ENCODE measurements at regions of chr16 and their contacts with region 1.

Region 1: GRCh38 chr16:89641458-89642119 is 15.9 kb downstream of the CHMP1A start:
- H3K4me3 ChIP-seq: no peak overlapping the region
- H3K27ac ChIP-seq: no peak overlapping the region
- H3K4me1 ChIP-seq: no peaks in the 10 kb centered on the region
- CTCF ChIP-seq: no peak

Region 2: DNA sequence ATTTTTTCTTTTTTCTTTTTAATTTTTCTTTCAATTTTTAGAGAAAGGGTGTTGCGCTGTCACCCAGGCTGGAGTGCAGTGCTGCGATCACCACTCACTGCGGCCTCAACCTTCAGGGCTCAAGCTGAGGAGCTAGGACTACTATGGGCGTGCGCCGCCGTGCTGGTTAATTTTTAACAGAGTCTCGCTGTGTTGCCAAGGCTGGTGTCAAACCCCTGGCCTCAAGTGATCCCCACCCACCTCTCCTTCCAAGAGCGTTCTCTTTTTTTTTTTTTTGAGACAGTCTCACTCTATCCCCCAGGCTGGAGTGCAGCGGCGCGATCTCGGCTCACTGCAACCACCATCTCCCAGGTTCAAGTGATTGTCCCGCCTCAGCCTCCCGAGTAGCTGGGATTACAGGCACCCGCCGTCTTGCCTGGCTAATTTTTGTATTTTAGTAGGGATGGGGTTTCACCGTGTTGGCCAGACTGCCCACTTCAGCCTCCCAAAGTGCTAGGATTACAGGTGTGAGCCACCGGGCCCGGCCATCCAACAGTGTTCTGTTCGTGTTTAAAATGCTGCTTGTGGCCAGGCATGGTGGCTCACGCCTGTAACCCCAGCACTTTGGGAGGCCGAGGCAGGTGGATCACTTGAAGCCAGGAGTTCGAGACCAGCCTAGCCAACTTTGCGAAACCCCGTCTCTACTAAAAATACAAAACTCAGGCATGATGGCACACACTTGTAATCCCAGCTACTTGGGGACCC is 95.6 kb before region 1 on chr16:
- CTCF ChIA-PET with region 1: no interaction called
- POLR2A ChIA-PET with region 1: no interaction called
- H3K4me3 ChIP-seq: no peak overlapping the region
- H3K27ac ChIP-seq: no peak overlapping the region
- H3K4me1 ChIP-seq: no peaks in the 10 kb centered on the region
- CTCF ChIP-seq: no peak

Region 3: GRCh38 chr16:89565506-89566372 is 75.8 kb before region 1 on chr16:
- CTCF ChIA-PET with region 1: interaction called, 20 read pairs
- POLR2A ChIA-PET with region 1: interaction called, 8 read pairs
- H3K4me3 ChIP-seq: no peak overlapping the region
- H3K27ac ChIP-seq: peak overlapping the region; percentile 67
- H3K4me1 ChIP-seq: peaks cover 9% of the 10 kb centered on the region
- CTCF ChIP-seq: peak; percentile 98

Region 4: DNA sequence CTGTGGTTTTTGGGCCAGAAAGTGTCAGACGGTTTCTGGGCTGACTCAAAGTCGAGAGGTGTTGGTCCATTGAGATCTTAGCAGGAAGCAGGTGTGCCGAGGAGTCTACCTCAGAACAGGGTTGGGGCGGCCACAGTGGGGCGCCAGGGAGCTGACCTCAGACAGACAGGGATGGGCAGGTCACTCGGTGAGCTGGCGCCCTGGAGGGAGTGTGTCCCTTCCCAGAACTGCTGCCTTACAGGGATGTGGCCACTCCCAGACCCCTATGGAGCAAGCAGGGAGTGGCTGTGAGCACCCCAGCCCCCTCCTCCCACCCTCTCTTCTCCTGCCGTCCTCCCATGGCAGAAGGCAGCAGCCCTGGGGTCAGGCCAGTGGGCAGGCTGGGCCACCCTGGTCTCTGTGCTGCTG is 42.1 kb before region 1 on chr16:
- CTCF ChIA-PET with region 1: interaction called, 18 read pairs
- POLR2A ChIA-PET with region 1: no interaction called
- H3K4me3 ChIP-seq: no peak overlapping the region
- H3K27ac ChIP-seq: no peak overlapping the region
- H3K4me1 ChIP-seq: no peaks in the 10 kb centered on the region
- CTCF ChIP-seq: peak; percentile 33; the same call in 1 of the 2 replicates